ENCODE measurements at regions of chr9 and their contacts with region 1.

Region 1: DNA sequence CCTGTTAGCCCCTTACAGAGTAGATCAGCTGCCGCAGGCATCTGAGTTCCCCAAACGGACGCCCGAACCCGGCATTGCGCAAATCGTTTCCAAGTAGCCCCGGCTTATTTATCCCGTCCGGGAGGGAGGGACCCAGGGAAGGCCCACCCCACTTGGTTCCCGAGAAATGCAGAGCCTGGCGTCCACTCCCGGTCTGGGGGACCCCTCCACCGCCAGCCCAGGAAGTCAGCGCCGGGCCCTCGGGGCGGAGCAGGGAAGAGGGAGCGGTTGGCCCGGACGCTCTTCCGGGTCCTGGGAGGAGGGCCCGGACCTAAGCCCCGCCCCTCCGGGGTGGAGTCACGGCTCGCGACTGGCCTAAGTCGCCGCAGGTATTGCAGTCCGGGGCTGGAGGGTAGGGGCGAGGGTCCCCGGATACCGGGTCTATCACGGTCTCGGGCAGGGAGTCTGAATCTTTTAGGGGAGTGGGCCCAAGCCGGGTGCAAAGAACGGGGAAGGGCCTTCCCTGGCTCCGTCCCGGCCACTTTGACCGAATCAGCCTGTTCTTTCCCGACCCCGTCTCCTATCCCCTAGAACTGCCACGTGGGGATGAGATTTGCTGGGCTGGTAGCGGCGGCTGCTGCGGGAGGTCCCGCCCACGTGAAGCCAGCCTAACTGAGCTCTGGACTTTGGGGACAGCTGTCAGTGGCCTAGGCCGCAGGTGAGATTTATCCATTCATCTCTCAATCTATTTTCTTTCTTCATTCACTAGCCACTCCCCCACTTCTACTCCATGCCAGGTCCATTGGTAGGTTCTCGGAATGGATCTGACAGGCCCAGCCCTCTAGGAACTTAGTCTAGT is at the start of gene RABEPK:
- DNase-seq: peak; percentile 95
- H3K4me3 Mint-ChIP-seq: peak within 1 kb of the TSS; percentile 95
- H3K27ac Mint-ChIP-seq: peak within 1 kb of the TSS; percentile 92
- H3K4me1 Mint-ChIP-seq: peaks cover 7% of the 10 kb centered on the region
- H3K27me3 Mint-ChIP-seq: no peaks in the 10 kb centered on the region
- CTCF ChIP-seq: no peak
- total RNA-seq, gene RABEPK: 21.5 and 37.2 TPM in 2 replicates

Region 2: DNA sequence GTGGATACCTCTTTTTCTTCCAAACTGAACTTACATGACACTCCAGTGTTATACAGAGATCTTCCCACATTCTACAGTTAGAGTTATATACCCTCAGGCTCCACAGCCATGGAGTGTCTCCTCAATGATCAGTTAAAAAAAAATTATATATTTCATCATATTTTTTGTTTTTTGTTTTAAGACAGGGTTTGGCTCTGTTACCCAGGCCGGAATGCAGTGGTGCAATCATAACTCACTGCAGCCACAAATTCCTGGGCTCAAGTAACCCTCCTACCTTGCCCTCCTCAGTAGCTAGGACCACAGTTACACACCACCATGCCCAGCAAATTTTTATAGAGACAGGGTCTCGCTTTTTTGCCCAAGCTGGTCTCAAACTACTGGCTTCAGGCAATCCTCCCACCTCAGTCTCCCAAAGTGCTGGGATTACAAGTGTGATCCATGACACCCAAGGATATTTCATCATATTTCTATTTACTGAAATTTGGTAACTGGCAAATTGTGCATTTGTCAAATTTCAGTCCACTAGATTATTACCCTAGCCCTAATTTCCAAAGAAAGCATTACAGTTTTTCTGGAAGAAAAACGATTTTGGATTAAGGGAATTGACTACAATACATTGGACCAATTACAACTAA is 39.0 kb before region 1 on chr9:
- CTCF ChIA-PET with region 1: no interaction called
- POLR2A ChIA-PET with region 1: interaction called, 17 read pairs
- intact Hi-C with region 1: no loop called
- DNase-seq: peak; percentile 79
- H3K4me3 Mint-ChIP-seq: peak overlapping the region; percentile 22
- H3K27ac Mint-ChIP-seq: peak overlapping the region; percentile 78
- H3K4me1 Mint-ChIP-seq: peaks cover 13% of the 10 kb centered on the region
- H3K27me3 Mint-ChIP-seq: no peaks in the 10 kb centered on the region
- CTCF ChIP-seq: no peak

Region 3: DNA sequence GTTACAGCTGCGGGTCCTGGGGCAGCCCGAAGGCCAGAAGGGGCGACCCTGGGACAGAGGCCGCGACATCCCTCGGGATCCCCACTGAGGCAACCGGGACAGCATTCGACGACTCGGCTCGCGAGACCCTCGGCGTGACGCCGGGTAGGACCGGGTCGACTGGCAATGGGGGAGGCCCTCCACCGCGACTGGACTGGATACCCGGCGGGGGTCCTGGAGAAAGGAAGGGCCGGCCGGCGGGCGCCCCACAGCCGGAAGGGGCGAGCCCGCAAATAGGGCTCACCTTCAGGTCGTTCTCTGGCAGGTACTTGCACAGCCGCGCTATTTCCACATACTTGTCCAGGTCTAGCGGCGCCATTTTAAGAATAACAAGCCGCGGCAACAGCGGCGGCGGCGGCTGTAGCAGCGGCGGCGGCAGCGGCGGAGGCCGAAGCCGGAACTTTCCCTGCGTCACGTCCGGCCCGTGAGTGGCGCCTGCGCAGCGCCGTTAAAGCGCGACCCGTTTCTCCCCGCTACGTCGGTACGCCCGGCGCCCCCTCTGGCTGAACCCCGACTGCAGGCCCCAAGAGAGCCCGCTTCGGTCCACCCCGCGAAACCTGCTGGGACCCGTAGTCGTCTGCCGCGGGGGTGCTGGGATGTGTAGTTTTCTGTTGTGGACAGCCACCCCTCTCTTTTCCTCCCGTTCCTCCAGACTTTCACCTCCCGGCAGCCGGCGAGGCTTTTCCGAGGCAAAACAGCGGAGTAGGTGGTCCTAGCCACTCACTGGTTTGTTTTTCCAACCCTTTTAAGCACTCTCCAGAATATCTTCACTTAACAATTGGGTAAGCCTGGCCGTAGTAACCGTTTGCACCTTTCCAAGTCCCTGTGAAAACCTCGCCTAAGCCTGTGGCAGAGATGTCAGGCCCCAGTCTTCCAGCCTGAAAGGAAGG is 10.8 kb before region 1 on chr9 and contains the start of gene PPP6C:
- CTCF ChIA-PET with region 1: interaction called, 5 read pairs
- POLR2A ChIA-PET with region 1: interaction called, 68 read pairs
- intact Hi-C with region 1: no loop called
- DNase-seq: peak; percentile 92
- H3K4me3 Mint-ChIP-seq: peak within 1 kb of the TSS; percentile 90
- H3K27ac Mint-ChIP-seq: peak within 1 kb of the TSS; percentile 83
- H3K4me1 Mint-ChIP-seq: no peaks in the 10 kb centered on the region
- H3K27me3 Mint-ChIP-seq: no peaks in the 10 kb centered on the region
- CTCF ChIP-seq: peak; percentile 44
- total RNA-seq, gene PPP6C: 40.7 and 41.7 TPM in 2 replicates

Measured in MCF 10A (cell line).